Dorsolateral prefrontal cortex (tissue), 120 donors: ENCODE measurements at regions of chr9 and their contacts with region 1.

Region 1: DNA sequence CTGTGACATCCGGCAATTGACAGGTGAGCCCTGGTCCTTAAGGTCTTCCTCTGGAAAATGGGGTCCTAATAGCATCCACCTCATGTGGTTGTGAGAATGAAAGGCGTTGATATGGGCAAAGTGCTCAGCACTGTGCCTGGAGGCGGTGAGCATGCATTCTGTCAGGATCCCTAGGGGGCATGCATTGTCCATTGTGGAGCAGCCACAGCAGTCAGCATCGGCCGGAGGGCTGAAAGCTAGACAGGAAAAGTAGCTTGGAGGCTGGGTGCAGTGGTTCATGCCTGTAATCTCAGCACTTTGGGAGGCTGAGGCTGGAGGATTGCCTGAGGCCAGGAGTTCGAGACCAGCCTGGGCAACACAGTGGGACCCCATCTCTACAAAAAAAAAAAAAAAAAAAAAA is 122.2 kb downstream of the LHX2 start:
- DNase-seq: peak in 9 of 10 donors; percentile 5 to 63 (median 44)
- H3K4me3 ChIP-seq: no peak overlapping the region
- H3K27ac ChIP-seq: no peak overlapping the region
- H3K27me3 ChIP-seq: no peaks in the 10 kb centered on the region
- CTCF ChIP-seq: peak in 49 of 56 donors; percentile 11 to 65 (median 41)

Region 2: DNA sequence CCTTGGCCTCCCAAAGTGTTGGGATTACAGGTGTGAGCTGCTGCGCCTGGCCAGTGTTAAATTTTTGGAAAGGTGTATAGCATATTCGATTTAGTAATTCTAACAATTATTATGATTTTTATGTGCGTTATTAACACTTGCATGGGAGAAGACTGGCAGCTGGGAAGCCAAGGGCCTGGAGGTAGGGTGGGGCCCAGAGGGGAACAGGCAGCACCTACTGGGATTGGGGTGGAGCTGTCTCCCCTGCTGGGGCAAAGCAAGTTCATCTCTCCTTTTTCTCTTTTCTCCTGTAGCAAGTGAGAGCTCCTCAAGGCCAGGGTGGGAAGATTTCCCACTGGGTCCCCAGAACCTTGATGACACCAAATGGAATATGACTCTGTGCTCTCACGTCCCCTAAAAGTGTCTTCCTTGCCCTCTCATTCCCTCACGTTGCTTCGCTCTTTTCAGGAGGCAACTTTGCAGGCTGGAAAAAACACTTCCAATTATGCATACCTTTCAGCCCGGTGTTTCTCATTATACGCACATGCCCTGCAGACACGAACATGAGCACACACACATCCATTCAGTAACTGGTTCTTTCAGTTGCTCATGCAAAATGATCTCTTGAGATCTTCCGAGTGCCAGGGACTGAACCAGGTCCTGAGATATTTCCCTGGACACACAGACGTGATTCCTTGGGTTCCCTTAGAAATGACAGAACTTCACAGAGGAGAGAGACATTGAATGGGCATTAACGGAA is 145.2 kb before region 1 on chr9:
- intact Hi-C with region 1: no loop called
- DNase-seq: no peak
- H3K4me3 ChIP-seq: no peak overlapping the region
- H3K27ac ChIP-seq: no peak overlapping the region
- H3K27me3 ChIP-seq: peaks cover 0 to 3% (median 0%) of the 10 kb centered on the region in 45 donors
- CTCF ChIP-seq: no peak

Region 3: DNA sequence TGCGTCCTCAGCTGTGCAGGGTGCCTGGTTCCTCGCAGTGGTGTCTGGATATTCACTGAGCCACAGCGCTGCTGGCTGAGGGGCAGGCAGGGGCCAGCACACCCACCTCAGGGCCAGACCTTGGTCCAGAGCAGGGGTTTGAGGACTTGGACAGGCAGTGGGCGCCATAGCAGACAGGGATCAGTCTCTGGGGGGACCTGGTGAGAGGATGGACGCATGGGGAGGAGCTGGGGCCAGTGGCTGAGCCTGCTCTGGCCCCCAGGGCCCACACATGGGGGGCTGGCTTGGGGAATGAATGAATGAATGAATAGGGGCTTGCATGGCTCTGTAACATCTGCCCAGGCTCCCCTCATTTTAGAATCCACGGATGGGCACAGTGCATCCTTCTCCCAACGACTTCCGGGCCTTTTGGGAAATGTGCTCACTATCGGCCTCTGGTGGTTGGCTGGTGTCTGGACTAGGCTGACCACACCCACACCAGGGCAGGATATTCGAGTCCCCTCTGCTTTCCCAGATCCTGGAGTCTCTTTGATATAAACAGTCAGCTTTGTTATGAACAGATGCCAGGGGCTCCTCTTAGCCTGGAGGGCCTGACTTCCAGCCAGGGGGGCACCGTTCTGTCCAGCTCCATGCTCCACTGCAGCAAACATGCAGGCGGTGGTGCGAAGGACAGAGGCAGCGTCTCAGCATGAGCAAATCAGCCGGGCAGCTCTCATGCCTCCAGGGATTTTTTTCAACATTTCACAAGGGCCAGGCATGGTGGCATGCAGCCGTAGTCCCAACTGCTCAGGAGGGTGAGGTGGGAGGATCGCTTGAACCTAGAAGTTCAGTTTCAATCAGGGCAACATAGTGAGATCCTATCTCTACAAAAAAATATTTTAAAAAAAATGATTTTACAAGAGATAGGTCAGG is 186.6 kb after region 1 on chr9:
- intact Hi-C with region 1: loop called (anchors 2 to 5 kb)
- DNase-seq: peak in 9 of 10 donors; percentile 28 to 75 (median 71)
- H3K4me3 ChIP-seq: no peak overlapping the region
- H3K27ac ChIP-seq: peak overlapping the region in 1 of 59 donors; percentile 18
- H3K27me3 ChIP-seq: no peaks in the 10 kb centered on the region
- CTCF ChIP-seq: peak; percentile 54 to 89 (median 79)